AG04449 (cell line): ENCODE measurements at regions of chr11 and their contacts with region 1.

Region 1: GRCh38 chr11:117946842-117947526 is 17.8 kb upstream of the TMPRSS13 start:
- DNase-seq: peak; percentile 54
- H3K4me3 ChIP-seq: no peak overlapping the region
- CTCF ChIP-seq: peak; percentile 92

Region 2: DNA sequence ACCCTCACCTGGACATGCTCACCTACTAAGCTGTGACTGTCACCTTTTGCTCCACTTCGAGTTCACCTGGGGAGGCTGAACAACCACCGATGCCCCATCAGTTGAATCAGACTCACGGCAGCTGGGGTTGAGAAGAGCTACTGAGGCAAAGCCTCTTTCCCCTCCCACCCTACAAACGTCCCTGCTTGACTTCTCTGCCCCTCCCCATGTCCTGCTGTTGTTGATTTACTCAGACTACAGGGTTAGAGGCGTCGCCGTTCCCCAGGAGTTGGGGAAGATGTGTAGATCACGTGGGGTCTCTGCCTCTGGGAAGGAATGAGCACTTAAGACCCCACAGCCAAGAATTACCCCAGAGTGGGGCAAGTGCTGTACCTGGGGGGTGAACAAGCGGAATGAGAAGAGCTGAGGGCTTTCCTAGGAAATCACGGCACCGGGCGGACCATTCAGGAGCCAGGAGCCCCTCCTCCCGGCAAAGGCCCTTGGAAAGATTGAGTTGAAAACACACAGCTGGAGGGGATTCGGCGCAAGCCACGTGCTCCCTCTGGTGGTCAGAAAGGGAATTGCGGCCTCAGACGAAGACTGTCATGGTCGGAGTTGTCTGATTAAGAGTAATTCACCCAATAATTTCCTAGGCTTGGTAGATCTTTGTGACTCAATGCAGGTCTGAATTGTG is 129.5 kb before region 1 on chr11:
- CTCF ChIA-PET with region 1: interaction called, 243 read pairs
- POLR2A ChIA-PET with region 1: interaction called, 3 read pairs
- DNase-seq: no peak
- H3K4me3 ChIP-seq: no peak overlapping the region
- CTCF ChIP-seq: peak; percentile 94

Region 3: GRCh38 chr11:117843666-117844484 is 103.1 kb before region 1 on chr11:
- CTCF ChIA-PET with region 1: interaction called, 341 read pairs
- POLR2A ChIA-PET with region 1: no interaction called
- DNase-seq: no peak
- H3K4me3 ChIP-seq: no peak overlapping the region
- CTCF ChIP-seq: peak; percentile 96

Region 4: GRCh38 chr11:117907251-117907981 is 39.6 kb before region 1 on chr11:
- CTCF ChIA-PET with region 1: interaction called, 15 read pairs
- POLR2A ChIA-PET with region 1: no interaction called
- DNase-seq: peak; percentile 26
- H3K4me3 ChIP-seq: no peak overlapping the region
- CTCF ChIP-seq: no peak

Region 5: DNA sequence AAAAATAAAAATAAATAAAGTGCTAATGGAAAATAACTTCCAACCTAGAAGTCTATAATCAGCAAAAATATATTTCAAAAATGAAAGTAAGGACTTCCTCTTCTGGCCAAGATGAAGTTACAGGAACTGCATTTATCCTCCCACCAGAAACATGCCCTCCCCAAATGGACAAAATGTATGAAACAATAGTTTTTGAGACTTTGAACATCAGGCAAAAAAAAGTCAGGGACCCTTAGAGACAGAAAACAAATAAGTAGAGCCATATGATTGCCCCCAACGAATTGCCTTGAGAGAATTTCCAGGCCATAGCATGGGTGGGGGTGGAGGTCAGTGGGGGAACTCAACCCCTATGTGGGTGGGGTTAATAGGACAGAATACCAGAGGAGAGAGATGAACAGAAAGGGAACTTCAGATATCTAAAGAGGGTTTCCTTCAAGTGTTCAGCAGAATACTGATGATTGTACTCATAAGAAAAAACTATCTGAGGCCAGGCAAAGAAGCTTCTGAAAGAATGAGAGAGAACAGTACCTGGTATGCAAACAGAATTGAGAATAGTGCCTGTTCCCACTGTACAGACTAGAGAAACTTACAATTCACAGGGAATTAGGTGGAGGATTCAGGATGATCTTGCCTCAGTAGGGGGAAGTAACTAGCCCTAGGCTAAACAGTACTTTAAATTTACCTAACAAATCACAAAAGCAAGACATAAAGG is 12.6 kb after region 1 on chr11:
- CTCF ChIA-PET with region 1: interaction called, 18 read pairs
- POLR2A ChIA-PET with region 1: no interaction called
- DNase-seq: no peak
- H3K4me3 ChIP-seq: no peak overlapping the region
- CTCF ChIP-seq: no peak

Region 6: GRCh38 chr11:118027691-118028090 is 80.7 kb after region 1 on chr11:
- CTCF ChIA-PET with region 1: no interaction called
- POLR2A ChIA-PET with region 1: no interaction called
- DNase-seq: no peak
- H3K4me3 ChIP-seq: no peak overlapping the region
- CTCF ChIP-seq: no peak